Common myeloid progenitor, CD34-positive (primary cell): ENCODE measurements at regions of chr9 and their contacts with region 1.

Region 1: GRCh38 chr9:75027187-75028107 is 646 bp downstream of the CARNMT1 start:
- DNase-seq: peak; percentile 32 to 77 (median 66)
- H3K4me3 ChIP-seq: peak overlapping the region; percentile 79 to 98 (median 91)
- H3K27ac ChIP-seq: peak overlapping the region; percentile 46 to 83
- H3K4me1 ChIP-seq: peaks cover 15 to 31% (median 24%) of the 10 kb centered on the region in 4 experiments
- H3K27me3 ChIP-seq: no peaks in the 10 kb centered on the region

Region 2: GRCh38 chr9:75071530-75072124 is 44.2 kb after region 1 on chr9:
- CTCF ChIA-PET with region 1: interaction called, 17 read pairs
- POLR2A ChIA-PET with region 1: no interaction called
- DNase-seq: no peak
- H3K4me3 ChIP-seq: no peak overlapping the region
- H3K27ac ChIP-seq: no peak overlapping the region
- H3K4me1 ChIP-seq: no peaks in the 10 kb centered on the region
- H3K27me3 ChIP-seq: no peaks in the 10 kb centered on the region